ENCODE measurements at regions of chr14 and their contacts with region 1.

Region 1: DNA sequence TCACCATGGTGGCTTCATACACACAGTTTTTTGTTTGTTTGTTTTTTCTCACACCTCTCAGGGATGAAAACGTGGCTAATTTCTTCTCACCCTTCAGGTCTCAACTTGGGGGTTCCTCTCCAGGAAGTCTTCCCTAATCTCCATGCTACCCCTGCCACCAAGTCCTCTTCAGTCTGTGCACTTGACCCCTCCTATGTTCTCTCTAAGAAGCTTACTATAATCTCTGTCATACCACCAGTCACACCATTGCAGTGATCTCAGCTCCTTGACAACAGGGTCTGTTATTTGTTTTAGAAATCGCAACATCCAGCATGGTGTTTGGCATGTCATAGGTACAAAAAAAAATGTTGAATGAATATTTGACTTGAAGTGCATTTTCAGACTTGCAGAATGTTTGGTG is 83.4 kb downstream of the PRORP start:
- DNase-seq: no peak
- H3K4me3 Mint-ChIP-seq: no peak overlapping the region
- H3K27ac Mint-ChIP-seq: no peak overlapping the region
- H3K4me1 Mint-ChIP-seq: peaks cover 42% of the 10 kb centered on the region
- H3K27me3 Mint-ChIP-seq: no peaks in the 10 kb centered on the region

Region 2: DNA sequence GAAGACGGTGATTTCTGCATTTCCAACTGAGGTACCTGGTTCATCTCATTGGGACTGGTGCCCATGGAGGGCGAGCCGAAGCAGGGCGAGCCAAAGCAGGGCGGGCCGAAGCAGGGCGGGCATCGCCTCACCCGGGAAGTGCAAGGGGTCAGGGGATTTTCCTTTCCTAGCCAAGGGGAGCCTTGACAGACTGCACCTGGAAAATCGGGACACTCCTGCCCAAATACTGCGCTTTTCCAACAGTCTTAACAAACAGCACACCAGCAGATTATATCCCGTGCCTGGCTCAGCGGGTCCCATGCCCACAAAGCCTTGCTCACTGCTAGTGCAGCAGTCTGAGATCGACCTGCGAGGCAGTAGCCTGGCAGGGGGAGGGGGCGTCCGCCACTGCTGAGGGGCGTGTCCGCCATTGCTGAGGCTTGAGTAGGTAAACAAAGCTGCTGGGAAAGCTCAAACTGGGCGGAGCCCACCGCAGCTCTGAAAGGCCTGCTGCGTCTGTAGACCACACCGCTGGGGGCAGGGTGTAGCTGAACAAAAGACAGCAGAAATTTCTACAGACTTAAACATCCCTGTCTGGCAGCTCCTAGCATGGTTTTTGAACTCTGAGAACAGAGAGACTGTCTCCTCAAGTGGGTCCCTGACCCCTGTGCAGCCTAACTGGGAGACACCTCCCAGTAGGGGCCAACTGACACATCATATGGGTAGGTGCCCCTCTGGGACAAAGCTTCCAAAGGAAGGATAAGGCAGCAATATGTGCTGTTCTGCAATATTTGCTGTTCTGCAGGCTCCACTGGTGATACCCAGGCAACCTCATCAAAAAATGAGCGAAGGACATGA is 407.8 kb before region 1 on chr14:
- CTCF ChIA-PET with region 1: no interaction called
- POLR2A ChIA-PET with region 1: no interaction called
- intact Hi-C with region 1: no loop called
- DNase-seq: no peak
- H3K4me3 Mint-ChIP-seq: no peak overlapping the region
- H3K27ac Mint-ChIP-seq: no peak overlapping the region
- H3K4me1 Mint-ChIP-seq: peaks cover 5% of the 10 kb centered on the region
- H3K27me3 Mint-ChIP-seq: no peaks in the 10 kb centered on the region

Region 3: DNA sequence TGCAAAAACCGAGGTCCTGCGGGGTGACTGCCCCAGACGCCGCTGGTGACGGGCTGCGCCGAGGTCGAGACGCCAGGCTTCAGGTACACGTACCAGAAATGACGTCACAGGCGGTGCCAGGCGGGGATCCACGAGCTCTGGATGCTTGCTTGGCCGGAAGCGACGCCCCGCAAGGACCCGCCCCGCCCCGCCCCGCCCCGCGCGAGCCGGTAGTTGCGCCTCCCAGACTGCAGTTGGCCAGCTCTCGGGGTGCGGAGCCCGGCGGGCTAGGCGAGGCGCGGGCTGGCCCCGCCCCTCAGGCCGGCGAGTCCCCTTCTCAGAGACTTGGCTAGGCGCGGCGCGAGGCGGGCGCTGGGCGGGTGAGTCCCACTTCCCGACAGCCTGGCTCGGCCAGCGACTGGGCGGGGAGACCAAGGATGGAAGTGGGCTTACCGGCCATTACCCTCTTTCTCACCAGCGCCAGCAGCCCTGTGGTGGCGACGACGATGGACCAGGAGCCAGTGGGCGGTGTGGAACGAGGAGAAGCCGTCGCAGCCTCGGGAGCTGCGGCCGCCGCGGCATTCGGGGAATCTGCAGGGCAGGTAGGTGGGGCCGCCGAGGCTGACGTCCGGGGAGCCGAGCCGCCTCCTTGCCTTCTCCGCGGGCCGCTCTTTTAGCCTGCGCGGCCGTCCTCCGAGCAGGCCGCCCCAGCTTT is 159.5 kb before region 1 on chr14 and contains the start of gene FAM177A1:
- CTCF ChIA-PET with region 1: no interaction called
- POLR2A ChIA-PET with region 1: no interaction called
- intact Hi-C with region 1: loop called (anchors 2 kb)
- DNase-seq: peak; percentile 99
- H3K4me3 Mint-ChIP-seq: peak within 1 kb of the TSS; percentile 97
- H3K27ac Mint-ChIP-seq: peak within 1 kb of the TSS; percentile 98
- H3K4me1 Mint-ChIP-seq: peaks cover 28% of the 10 kb centered on the region
- H3K27me3 Mint-ChIP-seq: no peaks in the 10 kb centered on the region
- total RNA-seq, gene FAM177A1: 48.8 to 56.8 TPM

Measured in activated CD4-positive, alpha-beta memory T cell treated with anti-CD3 and anti-CD28 coated beads for 36 hours (primary cell).